IMR-90 (cell line): ENCODE measurements at regions of chr10 and their contacts with region 1.

Region 1: DNA sequence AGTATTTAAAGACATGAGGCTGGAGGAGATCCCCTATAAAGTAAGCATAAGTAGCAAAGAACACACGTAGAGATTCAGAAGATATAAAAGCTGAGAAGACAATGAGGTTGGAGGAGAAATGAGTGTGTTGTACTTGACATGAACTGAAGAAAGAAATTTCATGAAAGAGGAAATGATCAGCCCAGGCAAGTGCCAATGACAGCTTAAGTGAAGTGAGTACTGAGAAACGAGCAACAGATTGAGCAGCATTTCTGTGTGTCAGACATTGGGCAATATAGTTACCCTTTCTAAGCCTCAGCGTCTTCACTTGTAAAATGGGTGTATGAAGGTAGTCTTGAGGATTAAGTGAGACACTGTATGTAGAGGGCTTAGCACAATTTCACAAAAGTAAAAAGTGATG is 4.8 kb upstream of the LIPA start:
- DNase-seq: no peak
- ATAC-seq: no peak
- H3K4me3 ChIP-seq: no peak overlapping the region
- H3K27ac ChIP-seq: no peak overlapping the region
- H3K4me1 ChIP-seq: peaks cover 3% of the 10 kb centered on the region
- H3K27me3 ChIP-seq: peaks cover 2% of the 10 kb centered on the region; the same call in 1 of the 2 replicates
- CTCF ChIP-seq: no peak
- POLR2A ChIP-seq: no peak
- RAD21 ChIP-seq: no peak

Region 2: DNA sequence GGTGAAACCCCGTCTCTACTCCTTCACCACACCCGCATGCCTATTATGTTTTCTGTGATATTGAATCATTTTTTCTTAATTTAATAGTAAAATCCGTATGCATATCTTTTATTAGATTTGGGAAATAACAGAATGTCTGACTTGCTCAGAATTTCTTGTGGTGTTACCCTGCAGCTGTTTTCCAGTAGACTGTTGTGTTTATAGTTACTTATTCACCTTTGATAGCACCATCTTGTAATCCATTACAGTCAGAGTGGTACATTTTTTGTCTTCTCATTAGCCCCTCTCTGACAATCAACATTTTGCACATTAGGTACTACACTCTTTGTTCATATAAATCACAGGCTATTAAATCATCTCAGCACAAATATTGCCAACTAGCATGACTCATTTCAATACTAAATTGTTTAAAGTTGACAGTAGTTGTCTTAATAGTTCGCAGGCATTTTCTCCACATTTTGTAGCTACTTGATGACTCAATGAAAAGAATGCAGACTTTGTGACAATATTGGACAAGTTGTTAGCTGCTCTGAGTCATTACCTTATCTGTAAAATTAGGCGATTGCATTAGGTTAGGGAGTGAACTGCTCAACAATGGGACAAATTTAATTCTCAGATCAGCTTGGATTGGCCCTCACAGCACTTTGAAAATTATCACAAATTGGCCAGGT is 296.9 kb after region 1 on chr10:
- CTCF ChIA-PET with region 1: no interaction called
- POLR2A ChIA-PET with region 1: no interaction called
- dilution Hi-C with region 1: no loop called
- in situ Hi-C with region 1: loop called (anchors 5 kb)
- intact Hi-C with region 1: no loop called
- DNase-seq: peak; percentile 97
- ATAC-seq: peak; percentile 88
- H3K4me3 ChIP-seq: no peak overlapping the region
- H3K27ac ChIP-seq: no peak overlapping the region
- H3K4me1 ChIP-seq: peaks cover 4% of the 10 kb centered on the region; the same call in 1 of the 2 replicates
- H3K27me3 ChIP-seq: no peaks in the 10 kb centered on the region
- CTCF ChIP-seq: no peak
- POLR2A ChIP-seq: no peak
- RAD21 ChIP-seq: no peak